Activated naive CD4-positive, alpha-beta T cell treated with anti-CD3 and anti-CD28 coated beads for 36 hours (primary cell): ENCODE measurements at regions of chr20 and their contacts with region 1.

Region 1: DNA sequence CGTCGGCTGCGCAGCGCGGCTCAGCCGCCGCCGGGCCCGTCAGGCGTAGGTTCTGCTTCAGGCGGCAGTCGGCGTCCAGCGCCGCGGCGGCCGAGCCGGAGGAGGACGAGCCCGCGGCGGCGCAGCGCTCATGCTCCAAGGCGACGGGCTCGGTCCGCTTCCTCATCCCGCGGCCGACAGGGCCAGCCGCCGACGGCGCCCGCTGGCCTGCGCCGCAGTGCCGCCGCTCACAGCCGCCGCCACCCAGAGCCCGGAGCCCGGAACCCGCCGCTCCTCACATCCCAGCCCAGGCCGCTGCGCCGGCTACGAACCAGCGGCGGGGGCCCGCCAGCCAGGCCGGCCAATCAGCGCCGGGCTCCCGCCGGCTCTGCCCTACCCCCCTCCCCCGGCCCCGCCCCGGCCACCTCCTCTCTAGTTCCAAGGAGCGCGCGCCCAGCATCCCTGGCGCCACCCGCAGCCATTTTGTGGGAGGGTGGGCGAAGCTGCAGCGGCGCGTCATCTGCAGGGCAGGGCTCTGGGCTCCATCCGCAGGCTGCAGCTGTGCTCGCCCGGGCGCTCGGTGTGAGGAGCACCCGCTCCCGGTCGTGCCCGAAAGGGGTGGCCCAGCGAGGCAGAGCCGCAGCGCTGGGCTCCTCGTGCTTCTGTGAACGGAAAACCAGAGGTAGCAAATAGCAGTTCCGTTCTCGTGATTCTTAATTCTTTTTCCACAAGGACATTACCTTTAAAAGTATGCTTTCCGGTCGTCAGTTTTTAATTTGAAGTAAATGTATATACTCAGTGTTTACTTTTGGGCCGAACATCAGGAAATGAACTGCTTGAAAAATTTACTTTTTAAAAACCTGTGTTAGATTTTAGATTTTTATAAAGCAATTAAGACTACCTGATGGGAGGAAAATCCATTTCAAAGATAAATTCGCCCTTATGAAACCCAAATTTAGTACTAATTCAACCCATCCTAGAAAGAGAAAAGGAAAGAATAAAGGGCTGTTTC is at the start of gene ABHD12:
- DNase-seq: peak; percentile 97
- H3K4me3 Mint-ChIP-seq: peak within 1 kb of the TSS; percentile 87
- H3K27ac Mint-ChIP-seq: peak within 1 kb of the TSS; percentile 81
- H3K4me1 Mint-ChIP-seq: peaks cover 11% of the 10 kb centered on the region
- H3K27me3 Mint-ChIP-seq: no peaks in the 10 kb centered on the region
- total RNA-seq, gene ABHD12: 13.0 to 14.7 TPM

Region 2: DNA sequence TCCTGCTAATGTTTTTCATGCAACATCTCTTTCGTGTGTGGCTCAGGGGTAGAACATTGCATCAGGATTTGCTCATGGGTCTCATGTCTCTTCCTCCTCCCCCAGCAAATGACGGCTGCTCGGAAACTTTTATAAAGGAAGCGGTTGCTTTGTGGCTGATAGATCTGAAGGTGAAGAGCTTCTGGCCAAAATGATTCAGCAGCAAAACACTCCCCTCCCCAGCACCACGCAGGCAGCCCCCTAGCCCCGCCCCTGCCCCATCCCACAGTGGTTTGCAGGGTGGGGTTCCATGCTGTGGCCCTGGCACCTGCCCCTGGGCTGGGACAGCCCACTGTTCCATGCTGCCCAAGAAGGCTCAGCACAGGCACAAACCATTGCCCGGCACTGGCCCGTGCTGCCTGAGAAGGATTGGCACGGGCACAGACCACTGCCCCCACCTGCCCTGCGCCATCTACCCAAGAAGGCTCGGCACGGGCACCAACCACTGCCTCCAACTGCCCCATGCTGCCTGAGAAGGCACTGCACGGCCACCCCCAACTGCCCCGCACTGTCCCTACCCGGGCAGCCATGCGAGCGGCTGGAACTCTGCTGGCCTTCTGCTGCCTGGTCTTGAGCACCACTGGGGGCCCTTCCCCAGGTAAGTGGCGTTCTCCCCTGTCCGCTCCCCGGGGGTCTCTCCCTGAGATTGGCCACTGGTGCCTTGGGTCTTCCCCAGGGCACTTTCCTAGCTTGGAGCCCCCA is 441.7 kb before region 1 on chr20 and contains the start of gene CST7:
- CTCF ChIA-PET with region 1: no interaction called
- intact Hi-C with region 1: loop called (anchors 5 kb)
- DNase-seq: peak; percentile 94
- H3K4me3 Mint-ChIP-seq: peak within 1 kb of the TSS; percentile 72
- H3K27ac Mint-ChIP-seq: peak within 1 kb of the TSS; percentile 96
- H3K4me1 Mint-ChIP-seq: peaks cover 40% of the 10 kb centered on the region
- H3K27me3 Mint-ChIP-seq: no peaks in the 10 kb centered on the region
- total RNA-seq, gene CST7: 37.8 to 43.1 TPM

Region 3: GRCh38 chr20:25057234-25058050 is 333.4 kb before region 1 on chr20:
- CTCF ChIA-PET with region 1: no interaction called
- intact Hi-C with region 1: loop called (anchors 1 kb)
- DNase-seq: peak; percentile 88
- H3K4me3 Mint-ChIP-seq: peak overlapping the region; percentile 71
- H3K27ac Mint-ChIP-seq: peak overlapping the region; percentile 72
- H3K4me1 Mint-ChIP-seq: peaks cover 45% of the 10 kb centered on the region
- H3K27me3 Mint-ChIP-seq: no peaks in the 10 kb centered on the region

Region 4: DNA sequence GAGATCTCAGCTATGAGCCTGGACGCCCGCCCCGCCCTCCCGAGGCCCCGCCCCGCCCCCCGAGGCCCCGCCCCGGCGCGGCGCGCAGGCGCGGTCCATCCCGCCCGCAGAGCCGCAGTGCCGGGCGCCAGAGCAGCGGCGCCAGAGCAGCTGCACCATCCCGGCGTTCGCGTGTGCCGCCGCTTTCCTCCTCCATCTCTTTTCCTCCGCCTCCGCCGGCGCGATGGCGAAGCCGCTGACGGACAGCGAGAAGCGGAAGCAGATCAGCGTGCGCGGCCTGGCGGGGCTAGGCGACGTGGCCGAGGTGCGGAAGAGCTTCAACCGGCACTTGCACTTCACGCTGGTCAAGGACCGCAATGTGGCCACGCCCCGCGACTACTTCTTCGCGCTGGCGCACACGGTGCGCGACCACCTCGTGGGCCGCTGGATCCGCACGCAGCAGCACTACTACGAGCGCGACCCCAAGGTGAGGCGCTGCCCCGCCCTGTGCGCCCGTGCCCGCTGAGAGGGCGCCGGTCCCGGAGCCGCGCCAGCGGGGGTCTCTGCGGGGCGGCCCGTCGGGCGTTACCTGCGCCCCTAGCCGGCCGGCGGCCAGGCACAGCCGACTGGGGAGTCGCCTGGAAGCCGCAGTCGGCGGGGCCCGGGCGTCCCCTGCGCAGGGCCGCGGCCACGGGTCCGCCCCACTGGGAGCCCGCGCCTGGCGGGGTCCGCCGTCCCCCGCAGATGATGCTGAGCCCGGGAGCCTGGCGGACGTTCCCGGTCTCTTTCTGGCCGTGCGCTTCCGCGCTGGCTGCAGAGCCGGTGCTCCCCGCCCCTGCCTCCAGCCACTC is 142.7 kb before region 1 on chr20 and contains the start of gene PYGB:
- CTCF ChIA-PET with region 1: no interaction called
- intact Hi-C with region 1: loop called (anchors 2 kb)
- DNase-seq: peak; percentile 68
- H3K4me3 Mint-ChIP-seq: peak within 1 kb of the TSS; percentile 91
- H3K27ac Mint-ChIP-seq: peak within 1 kb of the TSS; percentile 82
- H3K4me1 Mint-ChIP-seq: peaks cover 57% of the 10 kb centered on the region
- H3K27me3 Mint-ChIP-seq: peaks cover 7% of the 10 kb centered on the region
- total RNA-seq, gene PYGB: 19.6 to 20.0 TPM

Region 5: GRCh38 chr20:25310268-25310920 is 80.4 kb before region 1 on chr20:
- CTCF ChIA-PET with region 1: interaction called, 3 read pairs
- intact Hi-C with region 1: loop called (anchors 1 kb)
- DNase-seq: peak; percentile 81
- H3K4me3 Mint-ChIP-seq: peak overlapping the region; percentile 56
- H3K27ac Mint-ChIP-seq: peak overlapping the region; percentile 76
- H3K4me1 Mint-ChIP-seq: peaks cover 31% of the 10 kb centered on the region
- H3K27me3 Mint-ChIP-seq: no peaks in the 10 kb centered on the region

Region 6: GRCh38 chr20:25444556-25444955 is 53.7 kb after region 1 on chr20:
- CTCF ChIA-PET with region 1: no interaction called
- intact Hi-C with region 1: loop called (anchors 10 kb)
- DNase-seq: no peak
- H3K4me3 Mint-ChIP-seq: no peak overlapping the region
- H3K27ac Mint-ChIP-seq: no peak overlapping the region
- H3K4me1 Mint-ChIP-seq: no peaks in the 10 kb centered on the region
- H3K27me3 Mint-ChIP-seq: no peaks in the 10 kb centered on the region

Region 7: DNA sequence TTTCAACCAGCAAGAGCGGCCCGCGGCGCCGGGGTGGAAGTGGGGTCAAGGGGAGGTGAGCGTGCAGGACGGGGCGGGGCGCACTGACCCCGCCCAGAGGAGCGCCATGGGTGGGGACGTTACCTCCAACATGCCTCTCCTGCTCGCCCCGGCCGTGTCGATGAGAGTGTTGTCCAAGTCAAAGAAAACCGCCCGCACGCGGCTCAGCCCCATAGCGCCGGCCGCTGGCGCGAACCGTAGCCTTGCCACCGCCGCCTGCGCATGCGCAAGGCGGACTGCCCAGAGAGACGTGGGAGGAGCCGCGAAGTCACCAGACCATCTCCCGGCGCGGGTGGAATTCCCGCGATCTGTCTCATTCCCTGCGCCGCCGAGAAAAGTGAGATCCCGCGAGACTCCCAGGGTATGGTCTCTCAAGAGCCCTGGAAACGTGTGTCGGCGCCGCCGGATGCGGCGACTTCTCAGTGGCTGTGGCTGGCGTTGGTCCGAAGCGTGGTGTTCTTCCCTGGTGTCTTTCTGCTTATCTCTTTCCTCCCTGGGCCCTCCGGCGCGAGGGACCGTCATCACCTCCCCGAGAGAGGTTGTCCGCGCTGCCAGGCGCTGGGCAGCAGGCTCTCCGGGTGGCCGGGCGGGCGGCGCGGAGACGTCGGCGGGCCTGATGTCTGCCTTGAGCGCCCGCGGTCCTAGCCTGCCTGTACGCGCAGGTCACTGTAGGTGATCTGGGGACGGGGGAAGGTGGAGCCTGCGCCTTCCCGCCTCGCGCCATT is 233.1 kb after region 1 on chr20 and contains the start of gene NANP:
- CTCF ChIA-PET with region 1: no interaction called
- intact Hi-C with region 1: loop called (anchors 1 kb)
- DNase-seq: peak; percentile 96
- H3K4me3 Mint-ChIP-seq: peak within 1 kb of the TSS; percentile 91
- H3K27ac Mint-ChIP-seq: peak within 1 kb of the TSS; percentile 95
- H3K4me1 Mint-ChIP-seq: peaks cover 18% of the 10 kb centered on the region
- H3K27me3 Mint-ChIP-seq: no peaks in the 10 kb centered on the region
- total RNA-seq, gene NANP: 6.4 to 6.9 TPM